Activated T-helper 1 cell treated with anti-CD3 and anti-CD28 coated beads, Interleukin-12 subunit alpha, Interleukin-12 subunit beta, Interleukin-2, Interleukin-4 antibody, amounts not matched to agents 30 ng/mL and 10 ng/mL and 1 ng/mL, durations not matched to agents 14 hours and 24 hours and 36 hours (primary cell): ENCODE measurements at regions of chr7 and their contacts with region 1.

Region 1: GRCh38 chr7:151341357-151342101 is at the start of gene NUB1:
- DNase-seq: peak; percentile 92
- H3K4me3 Mint-ChIP-seq: peak within 1 kb of the TSS; percentile 83
- H3K27ac Mint-ChIP-seq: peak within 1 kb of the TSS; percentile 76
- H3K4me1 Mint-ChIP-seq: peaks cover 23% of the 10 kb centered on the region
- H3K27me3 Mint-ChIP-seq: no peaks in the 10 kb centered on the region
- total RNA-seq, gene NUB1: 40.3 and 41.2 TPM in 2 replicates

Region 2: DNA sequence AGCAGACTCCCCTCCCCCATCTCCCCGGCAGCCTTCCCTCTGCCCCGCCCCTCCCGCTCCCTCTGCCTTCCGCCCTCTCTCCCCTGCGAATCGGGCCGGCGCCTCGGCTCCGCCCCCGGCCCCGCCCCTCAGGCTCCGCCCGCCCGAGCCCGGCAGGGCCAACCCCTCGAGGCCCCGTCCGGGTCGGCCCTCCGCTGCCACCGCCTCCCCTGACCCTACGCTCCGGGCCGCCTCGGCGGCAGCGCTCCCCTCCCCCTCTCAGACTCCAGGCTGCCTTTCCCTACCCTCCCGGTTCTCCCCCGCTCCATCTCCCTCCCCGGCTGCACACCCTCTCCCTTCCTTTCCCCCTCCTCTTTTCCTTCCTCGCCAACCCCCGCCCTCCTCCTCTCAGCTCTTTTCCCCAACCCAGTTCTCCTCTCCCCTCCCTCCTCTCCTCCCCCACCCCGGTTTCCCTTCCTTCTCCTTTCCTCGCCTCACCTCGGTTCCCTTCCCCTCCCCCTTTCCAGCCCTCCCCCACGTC is 1569.7 kb before region 1 on chr7:
- intact Hi-C with region 1: loop called (anchors 5 kb)
- DNase-seq: peak; percentile 83
- H3K4me3 Mint-ChIP-seq: peak overlapping the region; percentile 82
- H3K27ac Mint-ChIP-seq: no peak overlapping the region
- H3K4me1 Mint-ChIP-seq: no peaks in the 10 kb centered on the region
- H3K27me3 Mint-ChIP-seq: peaks cover 28% of the 10 kb centered on the region

Region 3: GRCh38 chr7:151315038-151315655 is 26.4 kb before region 1 on chr7:
- intact Hi-C with region 1: loop called (anchors 2 kb)
- DNase-seq: peak; percentile 68
- H3K4me3 Mint-ChIP-seq: no peak overlapping the region
- H3K27ac Mint-ChIP-seq: no peak overlapping the region
- H3K4me1 Mint-ChIP-seq: peaks cover 9% of the 10 kb centered on the region
- H3K27me3 Mint-ChIP-seq: no peaks in the 10 kb centered on the region